ENCODE measurements at regions of chr3 and their contacts with region 1.

Region 1: DNA sequence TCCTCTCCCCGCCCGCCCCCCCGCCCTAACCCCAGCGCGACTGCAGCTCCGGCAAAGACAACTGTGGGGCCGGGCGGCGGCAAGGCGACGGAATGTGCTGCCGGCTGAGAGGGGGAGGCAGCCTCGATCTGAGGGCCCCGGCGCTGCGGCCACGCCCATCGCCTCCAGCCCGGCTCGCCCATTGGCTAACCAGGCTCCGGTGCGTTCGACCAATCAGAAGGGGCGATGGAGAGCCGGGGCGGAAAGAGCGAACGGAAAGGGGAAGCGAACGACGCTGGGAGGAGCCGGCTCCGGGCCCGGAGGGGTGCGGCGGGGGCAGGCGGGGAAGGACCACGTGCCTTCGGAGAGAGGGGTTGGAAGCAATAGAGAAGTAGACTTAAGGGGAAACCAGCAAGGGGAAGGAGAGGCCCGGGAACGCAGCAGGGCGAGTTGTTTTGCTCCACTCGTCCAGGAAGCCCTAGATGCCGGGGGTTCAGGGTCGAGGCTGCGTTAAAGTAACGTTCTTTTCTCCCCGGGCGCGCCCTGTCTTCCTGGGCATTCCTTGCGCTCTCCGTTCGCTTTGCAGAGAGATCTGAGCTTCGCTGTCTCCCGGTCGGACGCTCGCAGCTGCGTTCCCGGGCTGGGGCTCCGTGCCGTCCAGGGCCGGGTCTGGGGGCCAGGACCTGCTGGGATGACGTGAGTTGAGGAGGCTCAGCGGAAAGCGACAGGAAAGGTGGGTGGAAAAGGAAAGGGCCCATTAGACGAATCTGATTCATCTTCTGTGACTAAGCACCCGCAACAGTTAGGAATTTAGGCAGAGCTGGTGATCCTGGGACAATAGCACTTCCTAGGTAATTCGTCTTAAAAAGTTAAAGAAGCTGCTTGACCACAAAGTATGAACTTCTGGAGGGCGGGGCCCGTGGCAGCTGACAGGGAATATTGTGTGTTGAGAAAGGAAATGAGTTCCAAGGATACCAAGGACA is at the start of gene KPNA4:
- DNase-seq: peak; percentile 96
- H3K4me3 Mint-ChIP-seq: peak within 1 kb of the TSS; percentile 97
- H3K27ac Mint-ChIP-seq: peak within 1 kb of the TSS; percentile 96
- H3K4me1 Mint-ChIP-seq: peaks cover 58% of the 10 kb centered on the region
- H3K27me3 Mint-ChIP-seq: no peaks in the 10 kb centered on the region
- total RNA-seq, gene KPNA4: 73.5 and 77.7 TPM in 2 replicates

Region 2: GRCh38 chr3:158801696-158802408 is 1763.9 kb before region 1 on chr3 and contains the start of gene MFSD1:
- intact Hi-C with region 1: loop called (anchors 10 kb)
- DNase-seq: peak; percentile 87
- H3K4me3 Mint-ChIP-seq: peak within 1 kb of the TSS; percentile 89
- H3K27ac Mint-ChIP-seq: peak within 1 kb of the TSS; percentile 65
- H3K4me1 Mint-ChIP-seq: peaks cover 17% of the 10 kb centered on the region
- H3K27me3 Mint-ChIP-seq: peaks cover 14% of the 10 kb centered on the region
- total RNA-seq, gene MFSD1: 21.2 and 26.0 TPM in 2 replicates

Region 3: DNA sequence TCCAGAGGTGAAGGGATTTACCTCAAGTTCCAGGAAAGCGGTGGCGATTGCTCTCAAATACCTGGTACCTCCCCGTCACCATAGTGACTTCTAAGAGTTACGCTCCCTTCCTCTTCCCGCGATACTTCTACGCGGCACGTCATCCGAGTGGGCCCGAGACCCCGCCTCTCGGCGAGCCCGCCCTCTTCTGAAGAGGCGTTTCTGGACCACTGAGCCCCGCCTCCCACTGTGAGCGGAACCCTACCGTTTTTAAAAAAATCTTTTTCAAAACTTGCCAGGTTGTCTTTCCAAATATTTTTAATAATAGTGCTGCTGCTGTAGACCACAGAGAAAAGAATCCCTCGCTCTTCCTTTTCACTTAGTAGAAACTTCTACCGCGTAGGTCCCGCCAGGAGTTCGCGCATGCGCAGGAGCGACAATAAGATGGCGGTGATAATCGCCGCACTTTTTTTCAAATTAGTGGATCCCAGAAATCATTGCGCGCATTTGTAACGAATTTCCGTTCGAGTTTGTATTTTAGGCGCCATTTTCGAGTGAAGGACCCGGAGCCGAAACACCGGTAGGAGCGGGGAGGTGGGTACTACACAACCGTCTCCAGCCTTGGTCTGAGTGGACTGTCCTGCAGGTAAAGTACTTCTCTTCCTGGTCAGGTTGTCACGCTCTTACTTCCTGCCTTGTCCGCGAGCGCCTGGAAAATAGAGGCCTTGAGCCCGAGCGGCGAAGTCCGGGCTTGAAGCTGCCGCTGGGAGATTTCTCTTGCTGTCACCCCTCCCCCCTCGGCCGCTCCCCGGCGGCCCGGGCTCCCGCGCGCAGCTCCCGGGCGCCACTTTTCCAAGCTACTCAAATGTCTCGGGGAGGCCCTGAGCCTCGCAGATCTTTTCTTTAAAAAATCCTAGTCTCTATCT is 166.3 kb before region 1 on chr3 and contains the starts of genes IFT80 and SMC4:
- intact Hi-C with region 1: loop called (anchors 1 kb)
- DNase-seq: peak; percentile 93
- H3K4me3 Mint-ChIP-seq: peak within 1 kb of the TSS; percentile 96
- H3K27ac Mint-ChIP-seq: peak within 1 kb of the TSS; percentile 98
- H3K4me1 Mint-ChIP-seq: peaks cover 57% of the 10 kb centered on the region
- H3K27me3 Mint-ChIP-seq: peaks cover 6% of the 10 kb centered on the region
- total RNA-seq, gene IFT80: 14.0 and 14.8 TPM in 2 replicates
- total RNA-seq, gene SMC4: 163 and 164 TPM in 2 replicates

Region 4: GRCh38 chr3:160754855-160755747 is 189.4 kb after region 1 on chr3:
- intact Hi-C with region 1: loop called (anchors 1 kb)
- DNase-seq: peak; percentile 84
- H3K4me3 Mint-ChIP-seq: peak overlapping the region; percentile 93
- H3K27ac Mint-ChIP-seq: peak overlapping the region; percentile 98
- H3K4me1 Mint-ChIP-seq: peaks cover 37% of the 10 kb centered on the region
- H3K27me3 Mint-ChIP-seq: peaks cover 40% of the 10 kb centered on the region

Region 5: GRCh38 chr3:160941885-160942494 is 376.3 kb after region 1 on chr3:
- intact Hi-C with region 1: loop called (anchors 10 kb)
- DNase-seq: peak; percentile 50
- H3K4me3 Mint-ChIP-seq: no peak overlapping the region
- H3K27ac Mint-ChIP-seq: no peak overlapping the region
- H3K4me1 Mint-ChIP-seq: peaks cover 7% of the 10 kb centered on the region
- H3K27me3 Mint-ChIP-seq: no peaks in the 10 kb centered on the region

Measured in activated T-helper 1 cell treated with anti-CD3 and anti-CD28 coated beads, Interleukin-12 subunit alpha, Interleukin-12 subunit beta, Interleukin-2, Interleukin-4 antibody, amounts not matched to agents 30 ng/mL and 10 ng/mL and 1 ng/mL, durations not matched to agents 14 hours and 24 hours and 36 hours (primary cell).